Right lobe of liver (tissue), 6 donors: ENCODE measurements at regions of chr20 and their contacts with region 1.

Region 1: DNA sequence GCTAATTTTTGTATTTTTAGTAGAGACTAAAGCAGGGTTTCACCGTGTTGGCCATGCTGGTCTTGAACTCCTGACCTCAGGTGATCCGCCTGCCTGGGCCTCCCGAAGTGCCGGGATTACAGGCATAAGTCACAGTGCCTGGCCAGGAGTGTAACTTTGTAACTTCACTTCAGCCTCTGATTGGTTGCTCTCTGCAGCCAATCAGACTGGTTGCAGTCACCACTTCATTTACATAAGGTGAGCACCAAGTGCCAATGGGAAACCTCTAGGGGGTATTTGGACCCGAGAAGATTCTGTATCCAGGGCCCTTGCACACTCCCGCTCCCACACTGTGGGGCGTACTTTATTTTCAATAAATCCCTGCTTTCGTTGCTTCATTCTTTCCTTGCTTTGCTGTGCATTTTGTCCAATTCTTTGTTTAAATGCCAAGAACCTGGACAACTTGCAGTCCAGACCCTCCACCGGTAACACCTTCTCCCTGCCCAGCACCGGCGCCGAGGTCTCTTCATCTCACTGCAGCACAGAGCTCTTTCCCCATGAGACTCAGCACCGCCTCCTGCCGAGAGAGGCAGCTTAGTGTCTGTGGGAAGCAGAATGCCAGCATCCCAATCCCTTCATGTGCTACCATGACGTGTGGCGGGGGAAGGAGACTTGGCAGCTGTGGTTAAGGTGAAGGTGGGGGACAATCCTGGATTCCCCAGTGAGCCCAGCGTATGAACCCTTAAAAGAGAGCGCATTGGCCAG is 14.0 kb upstream of the MRGBP start:
- DNase-seq: no peak
- ATAC-seq: no peak
- H3K4me3 ChIP-seq: no peak overlapping the region
- H3K27ac ChIP-seq: no peak overlapping the region
- H3K4me1 ChIP-seq: no peaks in the 10 kb centered on the region
- H3K27me3 ChIP-seq: no peaks in the 10 kb centered on the region
- CTCF ChIP-seq: no peak
- POLR2A ChIP-seq: no peak

Region 2: DNA sequence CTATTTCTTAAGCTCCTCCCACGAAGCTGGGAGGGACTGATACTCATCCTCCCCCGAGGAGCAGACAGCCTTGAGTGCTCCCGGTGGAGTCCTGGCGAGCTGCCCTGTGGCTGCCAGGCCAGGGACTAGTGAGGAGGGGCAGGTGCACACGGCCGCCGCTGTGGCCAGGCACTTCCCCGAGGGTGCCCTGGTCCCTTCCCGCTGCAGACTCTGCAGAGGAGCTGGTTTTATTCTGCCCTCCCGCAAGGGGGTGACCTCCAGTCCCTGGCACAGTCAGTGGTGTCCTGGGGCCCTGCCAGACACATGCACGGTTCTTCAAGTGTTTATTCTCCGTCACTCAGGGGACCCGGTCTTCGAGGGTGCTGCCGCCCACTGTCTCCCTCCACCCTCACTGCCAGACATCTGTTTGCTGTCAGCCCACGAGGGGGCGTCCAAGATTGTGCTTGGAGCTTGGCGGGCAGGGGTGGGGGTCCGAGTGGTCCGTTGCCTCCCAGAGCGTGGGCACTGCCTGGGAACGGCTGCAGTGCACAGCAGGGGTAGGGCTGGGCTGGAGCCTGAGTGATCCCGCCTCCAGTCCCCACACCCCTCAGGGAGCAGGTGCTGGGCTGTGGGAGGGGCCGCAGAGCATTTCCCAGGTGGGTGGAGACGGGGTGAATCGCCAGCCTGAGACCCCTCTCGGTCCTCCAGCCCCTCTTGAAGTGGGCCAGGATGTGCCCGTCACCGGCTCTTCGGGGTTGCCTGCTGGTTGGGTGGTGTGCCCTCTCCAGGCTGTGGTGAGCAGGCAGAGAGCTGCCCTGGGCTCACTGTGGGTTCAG is 372.2 kb before region 1 on chr20:
- intact Hi-C with region 1: loop called in 1 of 2 experiments (anchors 10 kb)
- DNase-seq: no peak
- ATAC-seq: no peak
- H3K4me3 ChIP-seq: no peak overlapping the region
- H3K27ac ChIP-seq: no peak overlapping the region
- H3K4me1 ChIP-seq: peaks cover 0 to 19% (median 6%) of the 10 kb centered on the region in 4 donors
- H3K27me3 ChIP-seq: no peaks in the 10 kb centered on the region
- CTCF ChIP-seq: peak; percentile 13 to 40 (median 37)
- POLR2A ChIP-seq: no peak

Region 3: DNA sequence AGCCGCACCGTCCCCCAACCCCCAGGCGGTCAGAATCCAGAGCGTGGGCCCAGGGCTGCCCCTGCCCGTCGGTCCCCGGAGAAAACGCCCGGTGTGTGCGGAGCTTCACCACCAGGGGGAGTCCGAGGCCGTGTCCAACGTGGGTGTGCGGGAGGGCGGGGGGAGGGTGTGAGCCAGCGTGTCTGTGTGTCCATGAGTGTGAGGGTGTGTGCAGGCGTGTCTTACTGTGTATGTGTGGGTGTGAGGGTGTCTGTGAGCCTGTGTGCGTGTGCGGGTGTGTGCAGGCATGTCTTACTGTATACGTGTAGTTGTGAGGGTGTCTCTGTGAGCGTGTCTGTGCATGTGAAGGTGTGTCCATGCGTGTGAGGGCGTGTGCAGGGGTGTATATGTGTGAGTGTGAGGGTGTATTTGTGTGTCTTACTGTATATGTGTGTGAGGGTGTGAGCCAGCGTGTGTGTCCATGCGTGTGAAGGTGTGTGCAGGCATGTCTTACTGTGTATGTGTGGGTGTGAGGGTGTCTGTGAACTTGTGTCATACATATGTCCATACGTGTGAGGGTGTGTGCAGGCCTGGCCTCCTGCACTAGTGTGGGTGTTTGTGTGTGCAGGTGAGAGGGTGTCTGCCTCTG is 282.0 kb before region 1 on chr20:
- intact Hi-C with region 1: loop called (anchors 10 kb)
- DNase-seq: peak; percentile 76 to 81 (median 80)
- ATAC-seq: peak; percentile 77 to 89 (median 88)
- H3K4me3 ChIP-seq: no peak overlapping the region
- H3K27ac ChIP-seq: no peak overlapping the region
- H3K4me1 ChIP-seq: no peaks in the 10 kb centered on the region
- H3K27me3 ChIP-seq: no peaks in the 10 kb centered on the region
- CTCF ChIP-seq: peak; percentile 60 to 88 (median 68)
- POLR2A ChIP-seq: no peak

Region 4: GRCh38 chr20:62671765-62672164 is 110.6 kb before region 1 on chr20:
- intact Hi-C with region 1: loop called (anchors 5 kb)
- DNase-seq: no peak
- ATAC-seq: peak in 2 of 4 donors; percentile 9 to 22
- H3K4me3 ChIP-seq: no peak overlapping the region
- H3K27ac ChIP-seq: no peak overlapping the region
- H3K4me1 ChIP-seq: no peaks in the 10 kb centered on the region
- H3K27me3 ChIP-seq: no peaks in the 10 kb centered on the region
- CTCF ChIP-seq: no peak
- POLR2A ChIP-seq: no peak

Region 5: GRCh38 chr20:62937366-62938104 is 155.2 kb after region 1 on chr20:
- intact Hi-C with region 1: no loop called
- DNase-seq: peak; percentile 97 to 98 (median 98)
- ATAC-seq: peak; percentile 95 to 97 (median 97)
- H3K4me3 ChIP-seq: peak overlapping the region; percentile 70 to 97 (median 75)
- H3K27ac ChIP-seq: peak overlapping the region; percentile 69 to 91 (median 75)
- H3K4me1 ChIP-seq: peaks cover 0 to 22% (median 11%) of the 10 kb centered on the region in 4 donors
- H3K27me3 ChIP-seq: no peaks in the 10 kb centered on the region
- CTCF ChIP-seq: peak in 1 of 4 donors; percentile 7
- POLR2A ChIP-seq: peak; percentile 74